PC-9 (cell line): ENCODE measurements at regions of chr1 and their contacts with region 1.

Region 1: GRCh38 chr1:209048941-209049669 is 534.4 kb upstream of the CAMK1G start:
- DNase-seq: no peak
- H3K4me3 ChIP-seq: no peak overlapping the region
- H3K27ac ChIP-seq: no peak overlapping the region
- H3K4me1 ChIP-seq: peaks cover 9% of the 10 kb centered on the region
- H3K27me3 ChIP-seq: no peaks in the 10 kb centered on the region
- CTCF ChIP-seq: no peak

Region 2: DNA sequence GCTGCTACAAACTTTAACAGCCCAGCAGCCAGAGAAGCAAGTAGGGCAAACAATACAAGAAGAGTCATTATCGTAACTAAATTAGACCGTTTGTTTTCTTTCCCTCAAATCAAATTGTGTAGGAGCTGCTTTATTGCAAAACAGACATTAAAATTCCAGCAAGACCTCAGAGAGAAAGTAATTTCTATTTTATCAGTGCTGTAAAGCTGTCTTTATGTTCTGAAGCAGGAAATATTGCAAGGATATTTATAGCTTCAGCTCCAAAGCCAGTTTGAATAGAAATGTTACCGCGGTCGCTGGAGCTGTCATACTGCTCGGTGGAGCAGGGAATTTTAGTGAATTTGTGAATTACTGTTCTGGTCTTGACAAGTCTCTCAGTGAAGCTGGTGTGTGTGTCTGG is 301.1 kb before region 1 on chr1:
- CTCF ChIA-PET with region 1: interaction called, 10 read pairs
- POLR2A ChIA-PET with region 1: no interaction called
- intact Hi-C with region 1: no loop called
- DNase-seq: no peak
- H3K4me3 ChIP-seq: no peak overlapping the region
- H3K27ac ChIP-seq: no peak overlapping the region
- H3K4me1 ChIP-seq: no peaks in the 10 kb centered on the region
- H3K27me3 ChIP-seq: peaks cover 16% of the 10 kb centered on the region; the same call in 1 of the 2 replicates
- CTCF ChIP-seq: no peak

Region 3: DNA sequence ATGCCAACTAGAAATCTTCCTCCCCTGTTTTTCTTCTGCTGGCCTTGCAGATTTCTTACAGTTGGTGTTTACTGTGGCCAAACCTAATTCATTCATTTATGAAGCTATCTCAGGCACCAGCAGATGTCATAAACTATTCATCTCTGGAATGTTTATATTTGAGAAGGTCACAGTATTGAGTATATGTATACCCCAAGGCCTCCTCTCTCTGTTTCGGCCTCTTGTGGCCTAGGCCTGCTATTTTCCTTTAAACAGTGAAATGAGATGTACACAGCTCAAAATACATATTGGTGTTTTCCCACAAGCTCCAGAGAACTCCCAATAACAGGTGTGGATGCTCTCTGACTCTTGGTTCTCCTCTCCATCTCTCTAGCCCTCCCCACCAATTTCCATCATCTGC is 13.8 kb after region 1 on chr1:
- CTCF ChIA-PET with region 1: no interaction called
- POLR2A ChIA-PET with region 1: no interaction called
- intact Hi-C with region 1: no loop called
- DNase-seq: no peak
- H3K4me3 ChIP-seq: no peak overlapping the region
- H3K27ac ChIP-seq: no peak overlapping the region
- H3K4me1 ChIP-seq: no peaks in the 10 kb centered on the region
- H3K27me3 ChIP-seq: no peaks in the 10 kb centered on the region
- CTCF ChIP-seq: no peak